K562 (cell line): ENCODE measurements at regions of chr6 and their contacts with region 1.

Region 1: GRCh38 chr6:134174672-134175198 is 122.3 kb upstream of the SLC2A12 start:
- DNase-seq: peak; percentile 93 to 96 (median 95)
- ATAC-seq: peak; percentile 96
- H3K4me3 ChIP-seq: peak overlapping the region; percentile 80
- H3K27ac ChIP-seq: peak overlapping the region; percentile 87
- H3K4me1 ChIP-seq: peaks cover 9 to 16% of the 10 kb centered on the region in 2 experiments; a peak in 4 of 5 replicates
- H3K27me3 ChIP-seq: no peaks in the 10 kb centered on the region
- CTCF ChIP-seq: peak in 2 of 3 experiments; percentile 24 to 33; a peak in 4 of 6 replicates
- EP300 ChIP-seq: peak; percentile 54
- POLR2A ChIP-seq: peak; percentile 97
- RAD21 ChIP-seq: peak; percentile 35 to 59

Region 2: GRCh38 chr6:134111062-134111677 is 63.6 kb before region 1 on chr6:
- CTCF ChIA-PET with region 1: no interaction called
- POLR2A ChIA-PET with region 1: no interaction called
- in situ Hi-C with region 1: no loop called
- intact Hi-C with region 1: no loop called
- DNase-seq: peak; percentile 79 to 85 (median 83)
- ATAC-seq: peak; percentile 86
- H3K4me3 ChIP-seq: no peak overlapping the region
- H3K27ac ChIP-seq: no peak overlapping the region
- H3K4me1 ChIP-seq: peaks cover 0 to 9% of the 10 kb centered on the region in 2 experiments; a peak in 2 of 5 replicates
- H3K27me3 ChIP-seq: peaks cover 10 to 20% of the 10 kb centered on the region in 2 experiments; a peak in 4 of 5 replicates
- CTCF ChIP-seq: peak; percentile 95 to 100 (median 100)
- EP300 ChIP-seq: no peak
- POLR2A ChIP-seq: no peak
- RAD21 ChIP-seq: peak; percentile 74 to 85

Region 3: DNA sequence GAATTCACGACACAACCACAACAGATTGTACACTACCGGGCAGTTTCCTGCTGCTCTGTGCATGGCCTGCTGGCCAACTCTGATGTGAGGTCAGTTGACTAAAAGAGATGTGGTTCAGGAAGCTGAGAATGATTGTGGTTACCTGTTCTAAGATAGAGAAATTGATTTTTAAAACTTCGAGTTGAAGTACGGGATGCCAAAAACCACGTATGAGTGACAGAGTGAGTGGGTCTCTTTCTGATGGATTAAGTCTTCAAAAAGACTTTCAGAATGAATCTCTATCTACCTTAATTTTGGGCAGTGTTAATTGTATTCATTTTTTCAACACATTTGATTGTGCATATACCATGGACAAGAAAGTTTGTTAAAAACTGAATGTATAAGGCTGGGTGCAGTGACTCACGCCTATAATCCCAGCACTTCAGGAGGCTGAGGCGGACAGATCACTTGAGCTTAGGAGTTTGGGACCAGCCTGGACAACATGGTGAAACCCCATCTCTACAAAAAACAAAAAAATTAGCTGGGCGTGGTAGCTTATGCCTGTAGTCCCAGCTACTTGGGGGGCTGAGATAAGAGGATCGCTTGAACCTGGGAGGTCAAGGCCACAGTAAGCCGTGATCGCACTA is 21.9 kb after region 1 on chr6:
- CTCF ChIA-PET with region 1: no interaction called
- POLR2A ChIA-PET with region 1: interaction called, 8 read pairs
- in situ Hi-C with region 1: no loop called
- intact Hi-C with region 1: loop called (anchors 1 kb)
- DNase-seq: peak in 3 of 4 experiments; percentile 22 to 86 (median 38)
- ATAC-seq: peak; percentile 81
- H3K4me3 ChIP-seq: no peak overlapping the region
- H3K27ac ChIP-seq: peak overlapping the region; percentile 82
- H3K4me1 ChIP-seq: peaks cover 30 to 45% of the 10 kb centered on the region in 2 experiments
- H3K27me3 ChIP-seq: no peaks in the 10 kb centered on the region
- CTCF ChIP-seq: no peak
- EP300 ChIP-seq: peak; percentile 69
- POLR2A ChIP-seq: no peak
- RAD21 ChIP-seq: no peak

Region 4: DNA sequence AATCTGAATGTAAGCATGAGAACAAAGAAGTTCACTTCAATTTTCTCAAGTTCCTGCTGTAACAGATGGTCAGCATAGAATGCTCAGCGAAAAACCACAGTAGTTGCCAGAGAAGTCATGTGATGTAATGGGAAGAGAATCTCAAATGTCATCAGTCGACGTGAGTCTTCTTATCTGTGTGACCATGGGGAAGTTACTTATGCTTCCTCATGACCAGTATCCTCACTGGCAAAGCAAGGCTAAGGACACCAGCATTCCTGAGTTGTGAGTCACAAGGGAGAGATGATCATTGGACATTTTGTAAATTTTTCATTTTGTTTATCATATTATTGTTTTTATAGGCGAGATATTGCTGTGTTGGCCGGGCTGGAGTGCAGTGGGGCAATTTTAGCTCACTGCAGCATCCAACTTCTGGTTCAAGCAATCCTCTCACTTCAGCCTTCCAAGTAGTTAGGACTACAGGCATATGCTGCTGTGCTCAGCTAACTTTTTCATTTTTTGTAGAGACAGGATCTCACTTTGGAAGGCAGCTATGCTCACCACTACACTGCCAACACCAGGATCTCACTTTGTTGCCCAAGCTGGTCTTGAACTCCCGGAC is 121.3 kb after region 1 on chr6:
- CTCF ChIA-PET with region 1: no interaction called
- POLR2A ChIA-PET with region 1: interaction called, 6 read pairs
- in situ Hi-C with region 1: no loop called
- intact Hi-C with region 1: loop called (anchors 5 kb)
- DNase-seq: peak; percentile 79 to 91 (median 84)
- ATAC-seq: peak; percentile 92
- H3K4me3 ChIP-seq: no peak overlapping the region
- H3K27ac ChIP-seq: peak overlapping the region; percentile 59
- H3K4me1 ChIP-seq: peaks cover 26 to 31% of the 10 kb centered on the region in 2 experiments
- H3K27me3 ChIP-seq: no peaks in the 10 kb centered on the region
- CTCF ChIP-seq: no peak
- EP300 ChIP-seq: peak; percentile 93
- POLR2A ChIP-seq: no peak
- RAD21 ChIP-seq: peak in 1 of 2 experiments; percentile 28; a peak in 2 of 4 replicates

Region 5: DNA sequence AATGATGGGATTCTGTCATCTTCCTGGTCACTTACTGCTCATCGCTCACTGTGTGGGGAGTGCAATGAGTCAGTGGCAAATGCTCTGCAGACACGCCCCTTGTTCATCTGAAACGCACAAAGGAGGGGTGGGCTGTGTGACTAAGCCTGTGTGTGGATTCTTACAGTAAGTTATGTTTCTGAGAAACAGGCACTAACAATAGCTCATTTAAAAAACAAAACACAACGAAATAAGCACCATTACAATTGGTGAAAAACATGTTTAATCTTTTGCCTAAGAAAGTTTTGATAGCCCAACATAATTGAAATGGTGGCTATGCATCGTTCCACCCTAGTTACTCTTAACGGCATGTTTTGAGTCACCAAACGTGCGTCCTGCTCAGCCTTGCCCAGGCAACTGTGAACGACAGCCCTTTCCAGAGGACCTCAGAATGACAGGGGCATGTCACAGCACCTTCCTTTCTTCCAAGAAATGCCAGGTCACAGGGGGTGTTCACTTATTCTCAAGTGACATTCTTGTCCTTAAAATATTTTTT is 261.6 kb after region 1 on chr6:
- CTCF ChIA-PET with region 1: no interaction called
- POLR2A ChIA-PET with region 1: interaction called, 3 read pairs
- in situ Hi-C with region 1: no loop called
- intact Hi-C with region 1: loop called (anchors 5 kb)
- DNase-seq: peak; percentile 62 to 87 (median 70)
- ATAC-seq: peak; percentile 98
- H3K4me3 ChIP-seq: no peak overlapping the region
- H3K27ac ChIP-seq: peak overlapping the region; percentile 70; the same call in 2 of the 3 replicates
- H3K4me1 ChIP-seq: peaks cover 0 to 17% of the 10 kb centered on the region in 2 experiments; a peak in 3 of 5 replicates
- H3K27me3 ChIP-seq: no peaks in the 10 kb centered on the region; a peak in 1 of 5 replicates
- CTCF ChIP-seq: no peak
- EP300 ChIP-seq: no peak
- POLR2A ChIP-seq: 0 out of 2 replicates have a peak, but pooled peaks have one; percentile 32
- RAD21 ChIP-seq: peak; percentile 9 to 14; a peak in 1 of 4 replicates

Region 6: GRCh38 chr6:134647861-134648260 is 473.1 kb after region 1 on chr6:
- CTCF ChIA-PET with region 1: no interaction called
- POLR2A ChIA-PET with region 1: interaction called, 3 read pairs
- in situ Hi-C with region 1: loop called (anchors 5 kb)
- intact Hi-C with region 1: no loop called
- DNase-seq: no peak
- ATAC-seq: no peak
- H3K4me3 ChIP-seq: no peak overlapping the region
- H3K27ac ChIP-seq: no peak overlapping the region
- H3K4me1 ChIP-seq: no peaks in the 10 kb centered on the region
- H3K27me3 ChIP-seq: peaks cover 0 to 8% of the 10 kb centered on the region in 2 experiments; a peak in 3 of 5 replicates
- CTCF ChIP-seq: no peak
- EP300 ChIP-seq: no peak
- POLR2A ChIP-seq: no peak
- RAD21 ChIP-seq: no peak

Region 7: DNA sequence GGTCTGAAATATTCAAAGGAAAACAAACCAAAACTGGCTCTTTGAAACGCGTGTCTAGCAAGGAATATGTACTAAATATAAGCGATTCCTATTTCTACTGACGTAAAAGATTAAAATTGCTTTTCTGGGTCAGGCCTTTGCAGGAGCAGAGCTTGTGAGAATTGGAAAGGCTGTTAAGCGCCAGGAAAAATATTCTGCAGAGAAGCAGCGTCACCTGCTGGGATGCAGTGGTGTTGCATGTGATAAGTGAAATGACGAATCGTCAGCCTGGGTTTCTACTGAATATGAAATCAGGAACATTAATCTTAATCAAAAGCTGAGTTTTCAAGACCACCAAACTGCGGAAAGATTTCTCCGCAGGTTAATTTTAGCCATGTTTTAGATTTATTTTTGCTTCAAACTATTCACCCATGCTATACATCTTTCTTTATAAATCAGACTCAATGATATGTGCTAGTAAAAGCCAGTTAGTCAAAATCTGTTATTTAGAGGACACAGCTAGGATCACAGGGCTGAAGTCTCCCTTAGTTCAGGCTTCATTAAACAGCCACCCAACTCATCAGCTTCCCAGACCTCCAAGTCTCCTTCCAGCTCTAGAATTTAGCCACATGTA is 707.8 kb after region 1 on chr6:
- CTCF ChIA-PET with region 1: interaction called, 14 read pairs
- POLR2A ChIA-PET with region 1: interaction called, 4 read pairs
- in situ Hi-C with region 1: no loop called
- intact Hi-C with region 1: loop called (anchors 1 kb)
- DNase-seq: peak; percentile 35 to 62 (median 46)
- ATAC-seq: peak; percentile 87
- H3K4me3 ChIP-seq: no peak overlapping the region
- H3K27ac ChIP-seq: no peak overlapping the region
- H3K4me1 ChIP-seq: no peaks in the 10 kb centered on the region
- H3K27me3 ChIP-seq: no peaks in the 10 kb centered on the region; a peak in 5 of 5 replicates
- CTCF ChIP-seq: peak; percentile 79 to 89 (median 82)
- EP300 ChIP-seq: no peak
- POLR2A ChIP-seq: no peak
- RAD21 ChIP-seq: peak; percentile 77 to 87

Region 8: GRCh38 chr6:135438907-135439535 is 1264.3 kb after region 1 on chr6:
- CTCF ChIA-PET with region 1: interaction called, 3 read pairs
- POLR2A ChIA-PET with region 1: no interaction called
- in situ Hi-C with region 1: loop called (anchors 25 kb)
- intact Hi-C with region 1: loop called (anchors 10 kb)
- DNase-seq: peak; percentile 33 to 66 (median 40)
- ATAC-seq: peak; percentile 85
- H3K4me3 ChIP-seq: no peak overlapping the region
- H3K27ac ChIP-seq: no peak overlapping the region
- H3K4me1 ChIP-seq: peaks cover 0 to 8% of the 10 kb centered on the region in 2 experiments; a peak in 3 of 5 replicates
- H3K27me3 ChIP-seq: no peaks in the 10 kb centered on the region
- CTCF ChIP-seq: peak; percentile 39 to 88 (median 63); a peak in 5 of 6 replicates
- EP300 ChIP-seq: no peak
- POLR2A ChIP-seq: no peak
- RAD21 ChIP-seq: peak; percentile 85 to 91